Endothelial cell of umbilical vein (primary cell): ENCODE measurements at regions of chr7 and their contacts with region 1.

Region 1: GRCh38 chr7:50665417-50666123 is 100.4 kb upstream of the DDC start:
- DNase-seq: no peak
- H3K4me3 ChIP-seq: no peak overlapping the region
- H3K27ac ChIP-seq: peak overlapping the region; percentile 64
- H3K4me1 ChIP-seq: peaks cover 49% of the 10 kb centered on the region
- H3K27me3 ChIP-seq: no peaks in the 10 kb centered on the region
- CTCF ChIP-seq: no peak
- POLR2A ChIP-seq: no peak

Region 2: GRCh38 chr7:50685135-50686080 is 19.8 kb after region 1 on chr7:
- CTCF ChIA-PET with region 1: no interaction called
- POLR2A ChIA-PET with region 1: no interaction called
- dilution Hi-C with region 1: no loop called
- intact Hi-C with region 1: loop called (anchors 2 kb)
- DNase-seq: peak; percentile 58
- H3K4me3 ChIP-seq: no peak overlapping the region
- H3K27ac ChIP-seq: peak overlapping the region; percentile 75
- H3K4me1 ChIP-seq: peaks cover 30% of the 10 kb centered on the region
- H3K27me3 ChIP-seq: no peaks in the 10 kb centered on the region
- CTCF ChIP-seq: no peak
- POLR2A ChIP-seq: no peak